ENCODE measurements at regions of chr10 and their contacts with region 1.

Region 1: DNA sequence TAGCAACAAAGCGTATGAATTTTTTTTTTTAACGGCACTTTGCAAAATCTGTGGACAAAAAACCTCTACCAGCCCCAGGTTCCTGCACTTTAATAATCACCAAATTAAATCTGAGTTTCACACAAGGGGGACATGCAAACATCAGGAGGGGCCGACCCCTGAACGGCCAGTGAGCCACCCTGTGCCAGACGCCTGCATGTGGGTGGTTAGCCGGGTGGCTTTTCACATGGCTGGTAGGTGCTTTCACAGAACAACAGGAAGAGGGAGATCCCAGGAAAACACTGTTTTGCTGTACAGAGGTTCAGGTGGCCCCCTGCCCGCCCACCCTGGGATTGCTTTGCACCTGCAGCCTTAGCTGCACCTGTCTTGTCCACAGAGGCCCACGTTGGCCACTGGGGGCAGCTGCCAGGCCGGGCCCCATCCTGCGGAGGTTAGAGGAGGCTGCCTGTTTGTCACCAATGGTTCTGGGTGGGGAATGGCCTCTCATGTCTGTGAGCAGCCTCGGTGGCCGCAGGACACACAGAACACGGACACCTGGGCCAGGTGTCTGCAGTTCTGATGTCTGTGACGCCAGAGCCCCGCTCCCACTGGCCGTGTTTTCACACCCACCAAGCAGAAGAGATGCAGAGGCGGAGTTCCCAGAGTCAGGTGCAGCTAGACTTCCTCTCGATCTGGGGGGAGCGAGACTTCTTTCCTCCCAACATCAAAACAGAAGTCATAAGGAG is 107.7 kb downstream of the FAM53B start:
- DNase-seq: peak in 1 of 6 donors; percentile 53
- ATAC-seq: no peak
- H3K4me3 ChIP-seq: no peak overlapping the region
- H3K27ac ChIP-seq: no peak overlapping the region
- H3K4me1 ChIP-seq: peaks cover 0 to 13% (median 0%) of the 10 kb centered on the region in 3 donors
- H3K27me3 ChIP-seq: no peaks in the 10 kb centered on the region
- CTCF ChIP-seq: no peak

Region 2: GRCh38 chr10:124493214-124493882 is 143.1 kb before region 1 on chr10:
- intact Hi-C with region 1: no loop called
- DNase-seq: no peak
- ATAC-seq: peak in 2 of 4 donors; percentile 62 to 67
- H3K4me3 ChIP-seq: no peak overlapping the region
- H3K27ac ChIP-seq: no peak overlapping the region
- H3K4me1 ChIP-seq: no peaks in the 10 kb centered on the region
- H3K27me3 ChIP-seq: no peaks in the 10 kb centered on the region
- CTCF ChIP-seq: no peak

Region 3: GRCh38 chr10:124732931-124733570 is 96.6 kb after region 1 on chr10:
- intact Hi-C with region 1: loop called in 1 of 3 experiments (anchors 5 kb)
- DNase-seq: no peak
- ATAC-seq: no peak
- H3K4me3 ChIP-seq: no peak overlapping the region
- H3K27ac ChIP-seq: no peak overlapping the region
- H3K4me1 ChIP-seq: peaks cover 12 to 25% (median 19%) of the 10 kb centered on the region in 3 donors
- H3K27me3 ChIP-seq: no peaks in the 10 kb centered on the region
- CTCF ChIP-seq: no peak

Region 4: DNA sequence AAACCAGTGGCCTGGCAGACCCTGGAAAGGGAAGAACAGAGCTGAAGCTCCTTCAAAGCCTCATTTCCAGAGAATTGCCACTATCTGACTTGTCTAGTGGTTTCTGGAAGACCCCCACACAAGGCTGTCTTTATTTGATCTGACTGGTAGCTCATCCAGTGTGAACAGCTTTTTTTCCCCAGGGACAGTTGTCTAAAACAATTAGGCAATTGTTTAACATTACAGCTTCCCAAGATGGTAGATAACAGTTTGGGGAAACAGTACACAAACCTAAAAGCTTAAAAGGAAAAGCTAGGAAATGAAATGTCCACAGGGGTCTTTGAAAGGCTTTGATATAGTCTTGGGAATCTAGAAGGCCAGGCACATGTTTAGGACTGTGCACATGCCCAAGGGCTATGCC is 727.4 kb after region 1 on chr10:
- intact Hi-C with region 1: no loop called
- DNase-seq: no peak
- ATAC-seq: no peak
- H3K4me3 ChIP-seq: no peak overlapping the region
- H3K27ac ChIP-seq: no peak overlapping the region
- H3K4me1 ChIP-seq: no peaks in the 10 kb centered on the region
- H3K27me3 ChIP-seq: no peaks in the 10 kb centered on the region
- CTCF ChIP-seq: no peak

Measured in pancreas (tissue), 10 donors.